Activated CD4-positive, alpha-beta T cell treated with anti-CD3 and anti-CD28 coated beads, Interleukin-2, amount 10 ng/mL, durations not matched to agents 24 days and 14 days (primary cell): ENCODE measurements at regions of chr1 and their contacts with region 1.

Region 1: DNA sequence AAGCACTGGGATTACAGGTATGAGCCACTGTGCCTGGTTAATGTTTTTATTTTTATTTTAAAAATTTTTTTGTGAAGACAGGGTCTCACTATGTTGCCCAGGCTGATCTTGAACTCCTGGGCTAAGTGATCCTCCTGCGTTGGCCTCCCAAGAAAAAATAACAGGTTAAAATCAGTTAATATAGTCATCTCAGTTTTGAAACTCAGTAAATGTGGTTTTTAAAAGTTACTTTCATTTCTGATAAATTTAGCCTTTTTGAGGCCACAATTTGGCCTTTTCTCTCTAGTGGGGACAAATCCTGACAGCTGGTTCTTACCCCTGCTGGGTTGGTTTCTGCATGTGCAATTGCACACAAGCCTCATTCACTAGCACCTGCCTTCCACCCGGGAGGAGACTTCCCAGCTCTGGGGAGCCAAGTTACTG is 13.3 kb downstream of the PMF1 start:
- DNase-seq: peak; percentile 73
- H3K4me3 Mint-ChIP-seq: peak overlapping the region; percentile 26
- H3K27ac Mint-ChIP-seq: peak overlapping the region; percentile 90
- H3K4me1 Mint-ChIP-seq: peaks cover 48% of the 10 kb centered on the region
- H3K27me3 Mint-ChIP-seq: no peaks in the 10 kb centered on the region

Region 2: GRCh38 chr1:156090822-156091188 is 135.3 kb before region 1 on chr1:
- intact Hi-C with region 1: no loop called
- DNase-seq: peak; percentile 95
- H3K4me3 Mint-ChIP-seq: no peak overlapping the region
- H3K27ac Mint-ChIP-seq: no peak overlapping the region
- H3K4me1 Mint-ChIP-seq: peaks cover 5% of the 10 kb centered on the region
- H3K27me3 Mint-ChIP-seq: peaks cover 41% of the 10 kb centered on the region

Region 3: DNA sequence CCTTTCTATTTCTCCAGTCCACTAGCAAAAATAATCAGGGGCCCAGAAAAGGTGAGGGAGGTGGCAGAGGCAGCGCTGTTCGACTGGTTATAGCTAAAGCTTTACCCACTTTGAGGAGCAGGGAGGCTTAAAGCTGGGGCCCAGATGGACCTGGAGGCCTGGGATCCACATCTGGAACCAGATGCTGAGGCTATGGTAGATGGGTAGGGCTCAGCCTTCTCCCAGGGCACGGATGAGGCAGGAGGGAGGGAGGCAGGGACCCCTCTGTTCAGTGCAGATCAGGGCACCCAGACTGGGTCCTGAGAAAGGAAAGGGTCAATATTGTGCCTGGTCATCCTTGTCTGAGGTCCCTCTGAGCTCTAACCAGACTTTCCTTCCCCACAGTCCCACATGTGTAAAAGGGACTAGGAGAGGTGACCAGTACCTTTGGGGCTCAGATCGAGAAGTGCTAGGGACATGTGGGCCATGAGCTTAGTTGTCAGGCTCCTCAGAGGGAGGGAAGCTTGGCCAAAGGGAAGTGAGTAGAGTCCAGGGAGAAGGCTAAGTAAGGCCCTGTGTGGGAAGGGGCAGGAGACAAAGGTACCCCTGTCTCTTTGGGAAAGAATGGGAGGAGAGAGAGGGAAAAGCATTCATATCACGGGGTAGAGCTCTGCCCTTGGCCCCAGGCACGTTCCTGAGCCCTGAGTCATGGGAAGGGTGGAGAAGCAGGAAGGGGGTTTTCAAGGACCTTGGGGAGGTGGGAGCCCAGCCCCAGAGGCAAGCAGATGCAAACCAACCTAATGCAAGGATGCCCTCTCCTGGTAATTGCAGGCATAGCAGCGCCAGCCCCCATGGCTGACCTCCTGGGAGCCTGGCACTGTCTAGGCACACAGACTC is 96.2 kb before region 1 on chr1:
- intact Hi-C with region 1: loop called (anchors 1 kb)
- DNase-seq: peak; percentile 94
- H3K4me3 Mint-ChIP-seq: no peak overlapping the region
- H3K27ac Mint-ChIP-seq: peak overlapping the region; percentile 64
- H3K4me1 Mint-ChIP-seq: peaks cover 42% of the 10 kb centered on the region
- H3K27me3 Mint-ChIP-seq: peaks cover 4% of the 10 kb centered on the region

Region 4: DNA sequence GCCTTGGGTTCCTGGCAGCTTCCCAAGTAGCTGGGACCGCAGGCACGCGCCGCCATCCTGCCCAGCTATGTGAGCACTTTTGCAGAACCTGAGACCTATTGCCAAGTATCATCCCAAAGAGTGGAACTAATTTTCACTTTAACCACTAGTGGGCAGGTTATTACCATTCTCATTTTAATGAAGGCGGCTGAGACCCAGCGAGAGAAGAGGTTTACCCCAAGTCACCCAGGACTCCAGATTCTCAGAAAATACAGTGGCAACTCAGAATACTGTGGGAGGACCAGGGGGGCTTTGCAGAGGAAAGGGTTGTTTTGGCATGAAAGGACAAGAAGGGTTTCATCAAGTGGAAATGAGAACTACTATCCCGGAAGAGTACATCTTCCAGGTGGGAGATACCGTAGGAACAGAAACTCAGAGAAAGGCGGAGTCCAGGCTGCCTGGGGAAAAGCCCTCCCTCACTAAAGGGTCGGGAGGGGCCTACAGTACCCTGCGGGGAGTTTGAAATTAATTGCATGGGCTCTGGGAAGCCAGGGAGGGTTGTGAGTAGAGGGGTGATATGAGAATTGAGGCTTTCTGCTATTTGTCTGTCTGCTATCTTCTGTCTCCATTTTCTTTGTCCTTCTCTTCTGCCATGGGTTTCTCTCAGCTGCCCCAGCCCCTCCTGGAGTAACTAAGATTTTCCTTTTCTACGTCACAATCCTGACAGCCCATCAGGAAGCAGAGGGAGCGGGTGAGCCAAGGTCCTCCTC is 79.9 kb before region 1 on chr1:
- intact Hi-C with region 1: loop called (anchors 1 kb)
- DNase-seq: peak; percentile 84
- H3K4me3 Mint-ChIP-seq: peak overlapping the region; percentile 61
- H3K27ac Mint-ChIP-seq: peak overlapping the region; percentile 90
- H3K4me1 Mint-ChIP-seq: peaks cover 29% of the 10 kb centered on the region
- H3K27me3 Mint-ChIP-seq: no peaks in the 10 kb centered on the region

Region 5: GRCh38 chr1:156198831-156199349 is 27.2 kb before region 1 on chr1:
- intact Hi-C with region 1: loop called (anchors 1 kb)
- DNase-seq: peak; percentile 74
- H3K4me3 Mint-ChIP-seq: no peak overlapping the region
- H3K27ac Mint-ChIP-seq: peak overlapping the region; percentile 97
- H3K4me1 Mint-ChIP-seq: peaks cover 54% of the 10 kb centered on the region
- H3K27me3 Mint-ChIP-seq: no peaks in the 10 kb centered on the region

Region 6: GRCh38 chr1:156510709-156511108 is 284.6 kb after region 1 on chr1:
- intact Hi-C with region 1: no loop called
- DNase-seq: no peak
- H3K4me3 Mint-ChIP-seq: no peak overlapping the region
- H3K27ac Mint-ChIP-seq: no peak overlapping the region
- H3K4me1 Mint-ChIP-seq: peaks cover 37% of the 10 kb centered on the region
- H3K27me3 Mint-ChIP-seq: peaks cover 3% of the 10 kb centered on the region